ENCODE measurements at regions of chr10 and their contacts with region 1.

Region 1: GRCh38 chr10:127853868-127854768 is 38.6 kb downstream of the CLRN3 start:
- DNase-seq: peak; percentile 60 to 82
- ATAC-seq: peak; percentile 86 to 96
- H3K4me3 ChIP-seq: no peak overlapping the region
- H3K27ac ChIP-seq: no peak overlapping the region
- H3K4me1 ChIP-seq: no peaks in the 10 kb centered on the region
- CTCF ChIP-seq: peak; percentile 81
- EP300 ChIP-seq: no peak
- POLR2A ChIP-seq: no peak
- RAD21 ChIP-seq: peak; percentile 90 to 91

Region 2: DNA sequence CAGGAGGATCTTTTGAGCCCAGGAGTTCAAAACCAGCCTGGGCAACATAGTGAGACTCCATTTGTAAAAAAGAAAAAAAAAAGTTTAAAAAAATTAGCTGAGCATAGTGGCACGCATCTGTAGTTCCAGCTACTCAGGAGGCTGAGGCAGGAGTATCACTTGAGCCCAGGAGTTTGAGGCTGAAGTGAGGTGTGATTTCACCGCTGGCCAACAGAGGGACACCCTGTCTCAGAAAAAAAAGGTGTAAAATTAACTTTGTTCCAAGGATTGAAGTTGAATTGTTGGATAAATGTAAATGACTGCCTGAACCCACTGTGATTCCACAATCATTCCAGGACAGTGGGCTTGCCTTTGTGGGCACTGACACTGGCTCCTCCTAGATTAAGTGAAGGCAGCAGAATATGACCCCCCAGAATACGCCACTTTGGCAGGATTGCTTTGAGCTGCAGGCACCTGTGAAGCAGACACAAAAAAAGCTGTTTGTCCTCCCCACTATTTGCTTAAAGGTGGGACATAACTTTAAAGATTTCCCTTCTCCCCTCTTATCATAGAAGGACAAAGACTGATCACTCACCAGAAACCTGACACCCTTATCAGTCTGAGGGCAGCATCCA is 174.4 kb before region 1 on chr10:
- CTCF ChIA-PET with region 1: interaction called, 11 read pairs
- POLR2A ChIA-PET with region 1: no interaction called
- DNase-seq: no peak
- ATAC-seq: peak in 1 of 2 experiments; percentile 58; a peak in 1 of 6 replicates
- H3K4me3 ChIP-seq: no peak overlapping the region
- H3K27ac ChIP-seq: no peak overlapping the region
- H3K4me1 ChIP-seq: no peaks in the 10 kb centered on the region
- CTCF ChIP-seq: peak; percentile 19; the same call in 2 of the 3 replicates
- EP300 ChIP-seq: no peak
- POLR2A ChIP-seq: no peak
- RAD21 ChIP-seq: peak; percentile 14 to 37; a peak in 1 of 5 replicates

Region 3: DNA sequence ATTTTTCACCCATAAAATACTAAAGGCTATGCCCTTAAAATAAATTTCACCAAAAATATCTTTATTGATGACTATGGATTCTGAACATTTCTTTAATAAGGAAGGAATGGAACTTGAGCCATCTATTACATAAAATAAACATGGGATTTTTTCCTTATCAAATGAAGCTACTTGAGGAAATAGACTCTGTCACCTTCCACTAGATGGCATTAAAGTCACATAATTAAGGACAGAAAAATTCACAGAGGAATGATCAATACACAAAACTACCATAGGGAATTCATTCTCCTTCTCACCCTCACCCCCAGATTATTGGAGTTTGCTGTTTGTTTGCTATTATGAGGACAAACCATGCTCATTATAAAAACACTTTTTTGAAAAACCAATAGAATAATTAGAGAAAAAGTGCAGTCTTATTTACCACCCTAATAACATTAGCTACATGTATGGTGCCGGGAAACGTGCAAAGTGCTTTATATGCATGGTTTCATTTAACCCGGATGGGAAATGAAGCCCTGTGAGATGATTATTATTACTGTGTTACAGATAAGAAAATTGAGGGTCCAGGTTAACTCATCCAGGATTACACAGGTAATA is 138.2 kb before region 1 on chr10:
- CTCF ChIA-PET with region 1: interaction called, 32 read pairs
- POLR2A ChIA-PET with region 1: no interaction called
- DNase-seq: peak in 1 of 2 experiments; percentile 28
- ATAC-seq: peak in 1 of 2 experiments; percentile 45; a peak in 1 of 6 replicates
- H3K4me3 ChIP-seq: no peak overlapping the region
- H3K27ac ChIP-seq: no peak overlapping the region
- H3K4me1 ChIP-seq: no peaks in the 10 kb centered on the region
- CTCF ChIP-seq: peak; percentile 62
- EP300 ChIP-seq: no peak
- POLR2A ChIP-seq: no peak
- RAD21 ChIP-seq: peak; percentile 62 to 69

Region 4: GRCh38 chr10:127834221-127834620 is 19.9 kb before region 1 on chr10:
- CTCF ChIA-PET with region 1: interaction called, 14 read pairs
- POLR2A ChIA-PET with region 1: no interaction called
- DNase-seq: no peak
- ATAC-seq: no peak
- H3K4me3 ChIP-seq: no peak overlapping the region
- H3K27ac ChIP-seq: no peak overlapping the region
- H3K4me1 ChIP-seq: no peaks in the 10 kb centered on the region
- CTCF ChIP-seq: no peak
- EP300 ChIP-seq: no peak
- POLR2A ChIP-seq: no peak
- RAD21 ChIP-seq: no peak

Region 5: DNA sequence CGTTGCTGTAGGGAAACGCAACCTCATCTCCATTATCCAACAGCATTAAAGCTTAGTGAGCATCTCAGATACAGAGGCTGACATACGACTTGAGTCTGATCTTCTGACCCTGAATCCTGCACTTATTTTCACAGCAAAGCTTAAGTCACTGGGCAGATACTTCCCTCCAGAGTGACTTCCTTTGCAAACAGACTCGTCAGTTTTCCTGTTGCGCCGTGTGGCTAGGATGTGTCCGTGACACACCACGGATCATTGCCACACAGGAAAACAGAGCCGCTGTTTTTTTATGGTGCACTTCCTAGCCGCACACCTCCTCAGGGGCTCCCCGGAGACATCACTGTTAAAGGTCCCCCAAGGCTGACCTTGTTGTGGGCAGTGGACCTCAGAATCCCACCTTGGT is 367.0 kb after region 1 on chr10:
- CTCF ChIA-PET with region 1: no interaction called
- POLR2A ChIA-PET with region 1: no interaction called
- DNase-seq: no peak
- ATAC-seq: no peak
- H3K4me3 ChIP-seq: no peak overlapping the region
- H3K27ac ChIP-seq: no peak overlapping the region
- H3K4me1 ChIP-seq: peaks cover 9% of the 10 kb centered on the region; the same call in 1 of the 3 replicates
- CTCF ChIP-seq: no peak
- EP300 ChIP-seq: no peak
- POLR2A ChIP-seq: no peak
- RAD21 ChIP-seq: no peak